Heart right ventricle (tissue), 16 donors: ENCODE measurements at regions of chr3 and their contacts with region 1.

Region 1: GRCh38 chr3:145533696-145534095 is 627.3 kb downstream of the PLOD2 start:
- DNase-seq: no peak
- ATAC-seq: no peak
- H3K4me3 ChIP-seq: no peak overlapping the region
- H3K27ac ChIP-seq: peak overlapping the region in 2 of 10 donors; percentile 5 to 16
- H3K4me1 ChIP-seq: peaks cover 0 to 13% (median 0%) of the 10 kb centered on the region in 9 donors
- H3K27me3 ChIP-seq: no peaks in the 10 kb centered on the region
- CTCF ChIP-seq: no peak

Region 2: GRCh38 chr3:145457825-145458552 is 75.7 kb before region 1 on chr3:
- intact Hi-C with region 1: loop called in 1 of 10 experiments (anchors 10 kb)
- DNase-seq: no peak
- ATAC-seq: no peak
- H3K4me3 ChIP-seq: no peak overlapping the region
- H3K27ac ChIP-seq: no peak overlapping the region
- H3K4me1 ChIP-seq: no peaks in the 10 kb centered on the region
- H3K27me3 ChIP-seq: no peaks in the 10 kb centered on the region
- CTCF ChIP-seq: no peak

Region 3: DNA sequence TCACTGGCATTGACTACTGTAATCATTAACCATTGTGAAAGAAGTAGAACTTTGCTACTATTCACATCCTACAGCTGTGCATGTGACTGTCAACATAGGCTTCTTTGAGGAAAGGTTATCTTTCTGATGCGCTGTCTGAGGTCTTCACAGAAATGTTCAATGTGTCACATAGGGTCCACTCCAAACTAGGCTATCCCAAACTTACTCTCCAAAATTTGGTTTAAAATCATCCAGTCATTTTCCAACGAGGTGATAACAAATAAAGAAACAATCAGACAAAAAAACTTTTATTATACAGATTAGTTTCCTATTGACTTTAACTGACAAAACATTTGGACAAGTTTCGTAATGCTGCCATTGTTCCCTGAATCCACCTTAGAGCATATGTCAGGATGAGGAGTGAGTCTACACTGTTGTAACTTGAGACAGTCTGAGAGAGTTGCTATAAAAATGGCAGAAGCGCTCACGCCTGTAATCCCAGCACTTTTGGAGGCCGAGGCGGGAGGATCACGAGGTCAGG is 115.7 kb after region 1 on chr3:
- intact Hi-C with region 1: no loop called
- DNase-seq: no peak
- ATAC-seq: no peak
- H3K4me3 ChIP-seq: no peak overlapping the region
- H3K27ac ChIP-seq: no peak overlapping the region
- H3K4me1 ChIP-seq: no peaks in the 10 kb centered on the region
- H3K27me3 ChIP-seq: no peaks in the 10 kb centered on the region
- CTCF ChIP-seq: no peak